ENCODE measurements at regions of chr13 and their contacts with region 1.

Region 1: DNA sequence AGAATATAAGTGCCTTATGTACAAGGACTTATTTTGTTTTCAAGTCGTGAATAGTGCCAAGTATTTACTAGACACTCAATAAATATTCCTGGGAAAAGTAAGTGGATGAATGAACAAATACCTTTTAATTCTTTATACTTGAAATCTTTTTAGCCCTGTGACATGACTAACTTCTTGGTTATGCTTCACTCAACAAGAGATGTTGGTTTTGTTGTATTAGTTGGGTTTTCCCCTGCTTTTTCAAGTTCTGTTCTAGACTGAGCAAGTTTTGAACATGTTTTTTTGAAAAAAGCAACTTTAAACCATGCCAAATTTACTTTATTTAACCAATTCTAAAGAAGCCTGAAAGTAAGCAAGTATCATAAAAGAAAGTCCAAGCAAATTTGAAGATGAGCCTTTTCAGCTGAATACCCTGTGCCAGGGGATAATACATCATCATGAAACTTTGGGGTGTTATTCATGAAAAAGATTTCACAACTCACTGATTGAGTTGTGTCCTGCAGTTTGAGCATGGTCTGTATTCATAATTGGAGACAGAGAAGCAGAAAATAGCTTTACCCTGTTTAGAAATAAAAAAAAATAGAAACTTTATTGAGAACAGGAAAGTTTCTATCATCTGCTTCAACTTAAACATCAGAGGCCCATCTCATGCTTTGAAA is 11.1 kb downstream of the LMO7 start:
- DNase-seq: no peak
- ATAC-seq: peak; percentile 90
- H3K4me3 Mint-ChIP-seq: peak overlapping the region; percentile 33
- H3K27ac Mint-ChIP-seq: peak overlapping the region; percentile 84
- H3K4me1 Mint-ChIP-seq: peaks cover 33% of the 10 kb centered on the region
- H3K27me3 Mint-ChIP-seq: no peaks in the 10 kb centered on the region
- CTCF ChIP-seq: no peak

Region 2: GRCh38 chr13:75372517-75372916 is 274.7 kb before region 1 on chr13:
- CTCF ChIA-PET with region 1: no interaction called
- POLR2A ChIA-PET with region 1: no interaction called
- intact Hi-C with region 1: no loop called
- DNase-seq: no peak
- ATAC-seq: peak; percentile 67
- H3K4me3 Mint-ChIP-seq: no peak overlapping the region
- H3K27ac Mint-ChIP-seq: no peak overlapping the region
- H3K4me1 Mint-ChIP-seq: no peaks in the 10 kb centered on the region
- H3K27me3 Mint-ChIP-seq: no peaks in the 10 kb centered on the region
- CTCF ChIP-seq: peak; percentile 69

Region 3: GRCh38 chr13:75635828-75636435 is 11.3 kb before region 1 on chr13 and contains the start of gene LMO7:
- CTCF ChIA-PET with region 1: no interaction called
- POLR2A ChIA-PET with region 1: no interaction called
- intact Hi-C with region 1: loop called (anchors 1 kb)
- DNase-seq: peak; percentile 61
- ATAC-seq: peak; percentile 68
- H3K4me3 Mint-ChIP-seq: peak within 1 kb of the TSS; percentile 83
- H3K27ac Mint-ChIP-seq: no peak within 1 kb of the TSS
- H3K4me1 Mint-ChIP-seq: peaks cover 12% of the 10 kb centered on the region
- H3K27me3 Mint-ChIP-seq: no peaks in the 10 kb centered on the region
- CTCF ChIP-seq: no peak
- total RNA-seq, gene LMO7: 13.5 and 19.5 TPM in 2 replicates

Measured in activated B cell treated with CpG ODN at 0.5 μM for 24 hours (primary cell).